GM13976 (cell line): ENCODE measurements at regions of chr1 and their contacts with region 1.

Region 1: DNA sequence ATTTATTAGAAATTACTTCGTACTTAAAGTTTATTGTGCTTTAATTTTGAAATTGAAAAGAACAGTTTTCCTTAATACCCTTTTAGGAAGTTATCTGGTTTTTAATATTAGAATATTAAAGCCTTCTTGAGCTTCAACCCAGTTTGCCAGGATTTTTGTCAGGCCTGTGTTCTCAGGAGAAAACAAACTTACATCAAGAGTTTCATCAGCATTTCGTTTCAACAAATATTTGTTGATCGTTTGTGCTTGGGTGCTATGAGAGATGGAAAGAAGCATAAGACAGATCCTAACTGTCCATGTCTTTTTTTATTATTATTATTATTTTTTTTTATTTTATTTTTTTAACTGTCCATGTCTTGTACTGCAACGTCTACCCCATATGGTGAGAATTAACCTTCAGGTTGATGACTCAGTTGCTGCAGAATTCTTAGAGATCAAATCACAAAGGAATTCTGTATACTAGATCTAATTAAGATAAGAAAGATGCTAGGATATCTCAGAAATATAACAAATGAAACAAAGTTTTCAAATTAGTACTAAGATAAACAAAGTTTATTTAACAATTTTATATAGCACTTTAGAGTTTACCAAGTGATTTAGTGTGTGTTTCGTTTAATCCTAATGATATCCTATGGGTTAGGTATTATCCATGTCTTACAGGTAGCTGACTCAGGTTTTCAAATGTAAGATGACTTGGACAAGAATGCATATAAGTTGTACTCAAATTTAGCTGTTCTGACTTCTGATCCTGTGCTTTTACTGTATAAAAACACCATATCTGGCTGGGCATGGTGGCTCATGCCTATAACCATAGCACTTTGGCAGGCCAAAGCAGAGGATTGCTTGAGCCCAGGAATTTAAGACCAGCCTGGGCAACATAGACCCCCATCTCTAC is 14.3 kb downstream of the FBXO28 start:
- DNase-seq: no peak
- CTCF ChIP-seq: no peak

Region 2: DNA sequence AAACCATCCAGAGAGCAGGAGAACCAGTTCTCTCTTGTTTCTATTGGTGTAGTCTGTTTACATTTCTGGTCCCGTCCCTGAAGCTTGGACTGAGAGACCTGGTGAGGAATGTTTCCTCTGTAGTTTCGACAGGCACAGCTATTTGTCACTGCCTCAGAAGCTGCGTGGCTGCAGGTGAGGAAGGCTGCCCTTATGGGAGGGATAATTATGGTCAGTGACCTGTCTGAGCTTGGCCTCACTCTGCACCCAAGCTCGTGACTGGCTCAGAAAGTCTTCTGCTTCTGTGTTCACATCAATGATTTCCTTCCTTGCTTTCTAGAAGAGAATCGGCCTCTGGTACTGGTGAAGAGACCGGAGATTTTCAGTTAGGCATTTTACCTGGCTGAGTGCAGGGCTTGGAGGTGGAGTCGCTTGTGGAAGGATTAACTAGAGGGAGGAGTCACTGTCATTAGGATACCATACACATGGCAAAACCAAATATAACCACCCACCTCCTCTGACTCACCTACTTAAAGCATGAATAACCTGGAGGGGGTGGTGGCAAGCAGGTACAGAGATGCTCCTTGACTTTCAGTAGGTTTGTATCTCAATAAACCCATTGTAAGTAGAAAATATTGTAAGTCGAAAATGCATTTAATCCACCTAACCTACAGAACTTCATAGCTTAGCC is 326.4 kb after region 1 on chr1:
- in situ Hi-C with region 1: loop called (anchors 25 kb)
- DNase-seq: no peak
- CTCF ChIP-seq: no peak

Region 3: DNA sequence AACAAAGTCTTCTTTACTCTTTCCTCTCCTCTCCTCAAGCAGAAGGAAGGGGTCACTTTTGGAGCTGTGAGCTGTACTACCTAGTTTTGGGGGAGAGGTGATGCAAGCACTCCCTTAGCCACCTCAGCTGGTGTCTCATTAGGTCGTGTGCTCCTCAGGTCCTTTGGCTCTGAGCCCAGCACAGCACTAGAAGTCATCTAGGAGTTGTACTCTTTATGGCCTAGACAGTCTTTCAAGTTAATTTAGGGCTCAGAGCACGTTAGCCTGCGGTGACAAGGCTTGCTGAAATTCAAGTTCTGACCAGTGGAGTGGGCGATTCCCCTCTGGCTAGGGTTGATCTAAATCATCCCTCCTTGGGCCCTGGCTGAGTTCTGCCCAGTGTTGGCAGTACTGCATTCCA is 354.4 kb after region 1 on chr1:
- in situ Hi-C with region 1: no loop called
- DNase-seq: no peak
- CTCF ChIP-seq: no peak